ENCODE measurements at regions of chrX and their contacts with region 1.

Region 1: DNA sequence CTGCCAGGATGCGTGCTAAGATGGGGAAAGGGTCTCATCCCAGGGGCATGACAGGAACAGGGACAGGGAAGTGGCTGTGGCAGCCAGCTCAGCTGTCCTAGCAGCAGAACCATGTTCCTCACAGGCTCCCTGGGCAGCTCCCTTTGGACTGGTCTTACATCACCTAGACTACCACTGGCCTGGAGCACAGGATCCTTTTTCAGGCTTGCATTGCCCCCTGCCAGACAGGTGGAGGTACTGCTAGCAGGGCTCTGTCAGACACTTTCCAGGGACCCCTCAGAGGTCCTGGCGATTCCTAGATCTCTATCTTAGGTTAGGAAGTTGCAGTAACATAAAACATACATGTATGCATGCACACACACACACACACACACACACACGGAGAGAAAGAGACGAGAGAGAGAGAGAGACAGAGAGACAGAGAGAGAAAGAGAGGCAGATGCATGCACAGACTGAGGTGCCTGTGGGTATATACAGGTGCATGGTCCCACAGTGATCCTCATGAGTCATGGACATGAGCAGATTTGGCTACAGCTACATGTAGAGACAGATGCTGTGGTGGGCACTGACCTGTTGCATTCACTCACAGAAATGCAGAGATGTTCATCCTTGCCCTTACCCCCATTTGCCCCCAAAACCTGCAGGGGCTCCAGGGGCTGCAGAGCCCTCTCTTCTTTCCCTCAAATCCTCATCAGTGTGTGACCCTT is 63.6 kb downstream of the STARD8 start:
- DNase-seq: peak; percentile 30 to 31
- H3K4me3 ChIP-seq: no peak overlapping the region
- H3K27ac ChIP-seq: no peak overlapping the region
- H3K4me1 ChIP-seq: no peaks in the 10 kb centered on the region
- H3K27me3 ChIP-seq: no peaks in the 10 kb centered on the region
- CTCF ChIP-seq: peak in 4 of 6 experiments; percentile 37 to 49 (median 41)
- POLR2A ChIP-seq: no peak

Region 2: GRCh38 chrX:68511255-68511654 is 199.8 kb before region 1 on chrX:
- intact Hi-C with region 1: loop called (anchors 10 kb)
- DNase-seq: no peak
- H3K4me3 ChIP-seq: no peak overlapping the region
- H3K27ac ChIP-seq: no peak overlapping the region
- H3K4me1 ChIP-seq: no peaks in the 10 kb centered on the region
- H3K27me3 ChIP-seq: no peaks in the 10 kb centered on the region
- CTCF ChIP-seq: peak; percentile 24 to 64 (median 53)
- POLR2A ChIP-seq: no peak

Region 3: GRCh38 chrX:68842781-68843581 is 132.0 kb after region 1 on chrX:
- intact Hi-C with region 1: no loop called
- DNase-seq: peak; percentile 59 to 61
- H3K4me3 ChIP-seq: no peak overlapping the region
- H3K27ac ChIP-seq: no peak overlapping the region
- H3K4me1 ChIP-seq: peaks cover 8 to 10% of the 10 kb centered on the region in 2 donors
- H3K27me3 ChIP-seq: no peaks in the 10 kb centered on the region
- CTCF ChIP-seq: no peak
- POLR2A ChIP-seq: no peak

Measured in thyroid gland (tissue), 4 donors.